ENCODE measurements at regions of chr4 and their contacts with region 1.

Region 1: DNA sequence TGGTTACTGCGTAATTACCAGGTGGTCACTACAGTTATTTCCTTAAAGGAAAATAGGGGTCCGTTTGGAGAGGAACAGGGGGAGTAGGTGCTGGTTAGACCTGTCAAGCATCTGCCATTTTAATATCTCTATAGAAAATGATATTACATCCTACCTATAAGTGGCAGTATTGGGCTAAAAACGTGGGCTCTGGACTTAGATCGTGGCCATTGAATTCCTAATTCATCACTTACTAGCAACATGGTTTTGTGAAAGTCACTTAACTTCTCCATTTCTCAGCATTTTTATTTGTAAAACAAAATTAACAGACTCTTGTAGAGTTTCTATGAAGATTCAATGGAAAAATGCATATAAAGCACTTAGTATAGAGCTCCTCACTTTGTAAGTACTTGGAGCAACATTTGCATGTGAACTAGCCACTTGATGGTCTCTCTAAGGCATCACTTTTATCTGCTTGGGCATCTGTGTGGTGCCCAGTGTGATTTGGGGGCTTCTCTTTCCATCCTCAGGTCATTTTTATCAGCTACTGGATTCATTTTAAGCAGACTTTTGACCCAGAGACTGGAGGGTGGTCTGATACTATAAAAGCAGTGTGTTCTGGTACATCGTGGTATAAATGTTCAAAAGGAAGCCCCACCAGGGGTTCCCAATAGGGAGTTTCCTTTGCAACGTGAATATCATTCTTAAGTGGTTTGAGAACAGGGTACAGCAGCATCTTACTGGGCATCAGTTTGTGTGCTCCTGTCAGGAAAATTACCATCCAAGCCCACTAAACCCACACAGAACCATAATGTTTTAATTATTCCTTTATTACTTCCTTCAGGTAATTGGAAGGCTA is 42.7 kb upstream of the RASSF6 start:
- DNase-seq: no peak
- H3K4me3 ChIP-seq: no peak overlapping the region
- H3K27ac ChIP-seq: no peak overlapping the region
- H3K4me1 ChIP-seq: no peaks in the 10 kb centered on the region
- H3K27me3 ChIP-seq: no peaks in the 10 kb centered on the region
- CTCF ChIP-seq: peak; percentile 37 to 58 (median 54)
- EP300 ChIP-seq: no peak
- POLR2A ChIP-seq: no peak

Region 2: DNA sequence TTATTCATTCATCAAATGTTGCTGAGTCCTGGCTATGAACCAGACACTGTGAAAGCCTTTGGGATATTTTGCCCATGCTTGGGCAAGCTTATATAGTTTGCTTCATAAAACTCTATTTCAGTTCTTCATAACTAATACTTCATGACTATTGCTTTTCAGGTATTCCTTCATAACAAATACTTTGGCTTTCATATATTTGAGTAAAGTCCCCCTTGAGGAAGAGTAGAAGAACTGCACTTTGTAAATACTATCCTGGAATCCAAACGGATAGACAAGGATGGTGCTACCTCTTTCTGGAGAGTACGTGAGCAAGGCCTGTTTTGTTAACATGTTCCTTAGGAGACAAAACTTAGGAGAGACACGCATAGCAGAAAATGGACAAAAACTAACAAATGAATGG is 228.6 kb before region 1 on chr4:
- intact Hi-C with region 1: no loop called
- DNase-seq: no peak
- H3K4me3 ChIP-seq: no peak overlapping the region
- H3K27ac ChIP-seq: no peak overlapping the region
- H3K4me1 ChIP-seq: no peaks in the 10 kb centered on the region
- H3K27me3 ChIP-seq: no peaks in the 10 kb centered on the region
- CTCF ChIP-seq: no peak
- EP300 ChIP-seq: no peak
- POLR2A ChIP-seq: no peak

Region 3: DNA sequence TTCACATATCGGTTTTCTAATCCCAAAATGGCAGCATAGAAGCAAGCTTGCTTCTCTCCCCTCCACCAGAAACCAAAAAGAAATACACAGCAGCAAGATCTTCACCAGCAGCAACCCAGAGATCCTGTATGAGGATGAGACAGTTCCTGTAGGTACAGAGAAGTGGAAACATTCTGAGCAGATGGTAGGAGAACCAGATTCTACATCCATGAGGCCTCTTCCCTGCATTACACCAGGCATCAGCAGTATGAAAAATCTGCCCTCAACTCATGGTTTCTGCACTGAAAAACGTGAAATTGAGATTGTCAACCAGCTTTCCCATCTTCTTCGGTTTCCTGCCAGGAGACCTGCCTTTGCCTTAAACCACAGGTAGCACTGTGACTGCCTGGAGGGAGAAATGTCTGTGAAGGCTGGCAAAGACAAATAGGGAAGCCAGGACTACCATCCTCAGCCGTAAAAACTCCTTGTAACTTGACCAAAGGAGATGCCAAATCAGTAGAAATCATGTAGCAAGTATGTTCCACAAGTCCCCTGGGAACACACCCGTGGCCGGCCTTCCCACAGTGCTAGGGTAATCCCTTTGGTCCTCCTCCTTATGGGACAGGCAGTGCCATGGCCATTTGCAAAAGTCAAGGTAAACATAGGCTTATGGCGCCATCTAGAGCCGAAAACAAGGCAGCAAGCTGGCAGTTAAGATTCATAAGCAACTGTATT is 471.0 kb after region 1 on chr4:
- intact Hi-C with region 1: loop called in 2 of 4 experiments (anchors 10 kb)
- DNase-seq: peak; percentile 28 to 74 (median 46)
- H3K4me3 ChIP-seq: no peak overlapping the region
- H3K27ac ChIP-seq: no peak overlapping the region
- H3K4me1 ChIP-seq: no peaks in the 10 kb centered on the region
- H3K27me3 ChIP-seq: no peaks in the 10 kb centered on the region
- CTCF ChIP-seq: peak in 2 of 3 donors; percentile 45 to 47
- EP300 ChIP-seq: no peak
- POLR2A ChIP-seq: no peak

Measured in ovary (tissue), 10 donors.